ENCODE measurements at regions of chr19 and their contacts with region 1.

Region 1: DNA sequence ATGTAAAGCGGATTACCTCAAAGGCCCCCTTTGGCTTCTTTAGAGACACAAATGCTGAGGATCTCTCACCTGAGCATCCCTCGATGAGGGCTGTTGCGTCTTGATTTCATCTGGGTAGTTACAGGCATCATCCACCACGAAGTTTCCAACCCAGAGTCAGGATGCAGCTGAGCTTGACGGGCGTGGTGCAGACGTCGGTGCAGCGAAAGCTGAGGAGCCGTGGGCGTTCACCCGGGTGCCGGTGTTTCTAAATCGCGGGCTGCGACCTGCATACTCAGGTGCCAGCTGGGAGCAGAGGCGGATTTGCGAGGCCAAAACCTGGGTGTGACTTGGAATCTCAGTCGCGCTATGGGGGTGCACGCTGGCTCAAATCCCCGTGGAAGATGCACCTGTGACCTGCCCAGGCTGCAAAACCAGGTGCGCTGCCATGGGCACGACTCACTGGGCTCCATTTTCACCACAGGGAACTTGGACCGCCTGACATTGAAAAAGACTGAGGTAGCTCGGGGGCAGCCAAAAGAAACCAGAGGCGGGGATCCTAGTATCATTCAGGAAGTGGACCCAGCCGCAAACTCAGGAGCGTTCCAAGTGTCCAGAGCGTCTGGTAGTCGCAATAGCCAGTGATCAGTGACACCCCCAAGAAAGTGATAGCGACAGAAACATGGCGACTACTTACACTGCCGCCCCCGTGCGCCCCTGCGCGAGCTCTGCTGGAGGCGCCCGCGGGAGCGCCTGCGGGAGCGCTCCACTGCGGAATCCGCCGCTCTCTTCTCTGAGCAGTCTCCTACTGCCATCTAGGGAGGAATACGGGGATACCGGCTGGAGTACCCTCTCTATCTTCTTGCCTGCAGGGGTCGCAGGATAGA is 36.4 kb upstream of the IGFL4 start:
- DNase-seq: peak; percentile 63 to 85
- H3K4me3 ChIP-seq: peak overlapping the region; percentile 49 to 75 (median 74)
- H3K27ac ChIP-seq: no peak overlapping the region
- H3K4me1 ChIP-seq: peaks cover 0 to 3% (median 1%) of the 10 kb centered on the region in 4 experiments; a peak in 2 of 7 replicates
- H3K27me3 ChIP-seq: peaks cover 2 to 17% (median 11%) of the 10 kb centered on the region in 4 experiments
- CTCF ChIP-seq: peak; percentile 85 to 100 (median 97)
- EP300 ChIP-seq: no peak
- POLR2A ChIP-seq: no peak
- RAD21 ChIP-seq: peak; percentile 94 to 97

Region 2: GRCh38 chr19:45981350-45981749 is 95.8 kb before region 1 on chr19:
- CTCF ChIA-PET with region 1: no interaction called
- POLR2A ChIA-PET with region 1: no interaction called
- DNase-seq: peak in 1 of 2 experiments; percentile 50
- H3K4me3 ChIP-seq: no peak overlapping the region
- H3K27ac ChIP-seq: no peak overlapping the region
- H3K4me1 ChIP-seq: peaks cover 0 to 7% (median 2%) of the 10 kb centered on the region in 4 experiments; a peak in 2 of 7 replicates
- H3K27me3 ChIP-seq: no peaks in the 10 kb centered on the region
- CTCF ChIP-seq: no peak
- EP300 ChIP-seq: no peak
- POLR2A ChIP-seq: peak in 1 of 2 experiments; percentile 46; a peak in 1 of 3 replicates
- RAD21 ChIP-seq: no peak

Region 3: GRCh38 chr19:46016426-46017094 is 60.6 kb before region 1 on chr19:
- CTCF ChIA-PET with region 1: interaction called, 250 read pairs
- POLR2A ChIA-PET with region 1: no interaction called
- DNase-seq: peak in 1 of 2 experiments; percentile 86
- H3K4me3 ChIP-seq: peak overlapping the region; percentile 30 to 55 (median 45); a peak in 7 of 8 replicates
- H3K27ac ChIP-seq: no peak overlapping the region
- H3K4me1 ChIP-seq: peaks cover 0 to 10% (median 9%) of the 10 kb centered on the region in 4 experiments; a peak in 6 of 7 replicates
- H3K27me3 ChIP-seq: peaks cover 5 to 21% (median 19%) of the 10 kb centered on the region in 4 experiments
- CTCF ChIP-seq: peak; percentile 77 to 92 (median 80)
- EP300 ChIP-seq: no peak
- POLR2A ChIP-seq: no peak
- RAD21 ChIP-seq: peak; percentile 32 to 46; a peak in 3 of 4 replicates

Region 4: DNA sequence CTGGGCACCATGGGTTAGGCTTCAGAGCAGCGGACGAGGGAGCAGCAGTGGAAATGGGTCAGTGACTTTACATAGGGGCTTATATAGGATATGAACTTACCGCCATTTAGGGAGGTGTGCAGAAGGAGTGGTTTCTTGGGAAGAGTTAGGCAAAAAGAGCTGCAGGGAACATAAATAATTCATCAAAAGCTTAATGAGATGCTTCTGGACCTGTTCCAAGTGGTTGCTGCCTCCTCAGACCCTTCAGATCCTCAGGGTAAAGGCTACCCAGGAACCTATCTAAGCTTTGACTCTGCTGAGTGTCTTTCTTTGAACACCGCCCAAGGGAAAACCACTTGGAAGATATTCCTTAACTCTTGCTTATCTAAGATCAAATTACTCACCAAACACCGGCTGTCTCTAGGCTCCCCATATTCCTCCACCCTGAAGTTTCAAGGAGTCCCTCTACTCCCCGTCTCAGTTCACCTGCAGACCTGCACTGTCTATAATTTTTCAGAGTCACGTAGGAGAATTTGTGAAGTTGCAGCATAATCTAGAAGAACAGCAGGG is 36.2 kb before region 1 on chr19 and contains the start of gene IGFL4:
- CTCF ChIA-PET with region 1: interaction called, 250 read pairs
- POLR2A ChIA-PET with region 1: no interaction called
- DNase-seq: no peak
- H3K4me3 ChIP-seq: no peak within 1 kb of the TSS
- H3K27ac ChIP-seq: no peak within 1 kb of the TSS
- H3K4me1 ChIP-seq: no peaks in the 10 kb centered on the region
- H3K27me3 ChIP-seq: peaks cover 0 to 2% (median 2%) of the 10 kb centered on the region in 4 experiments; a peak in 5 of 7 replicates
- CTCF ChIP-seq: no peak
- EP300 ChIP-seq: no peak
- POLR2A ChIP-seq: no peak
- RAD21 ChIP-seq: no peak
- total RNA-seq, gene IGFL4: 0.11 TPM in 1 of 2 replicates, not detected in the other

Region 5: GRCh38 chr19:46090444-46090843 is 13.3 kb after region 1 on chr19:
- CTCF ChIA-PET with region 1: interaction called, 16 read pairs
- POLR2A ChIA-PET with region 1: no interaction called
- DNase-seq: no peak
- H3K4me3 ChIP-seq: no peak overlapping the region
- H3K27ac ChIP-seq: no peak overlapping the region
- H3K4me1 ChIP-seq: no peaks in the 10 kb centered on the region
- H3K27me3 ChIP-seq: peaks cover 0 to 2% (median 0%) of the 10 kb centered on the region in 4 experiments; a peak in 1 of 7 replicates
- CTCF ChIP-seq: no peak
- EP300 ChIP-seq: no peak
- POLR2A ChIP-seq: no peak
- RAD21 ChIP-seq: no peak

Region 6: GRCh38 chr19:46181388-46181779 is 104.2 kb after region 1 on chr19:
- CTCF ChIA-PET with region 1: interaction called, 28 read pairs
- POLR2A ChIA-PET with region 1: interaction called, 3 read pairs
- DNase-seq: no peak
- H3K4me3 ChIP-seq: no peak overlapping the region
- H3K27ac ChIP-seq: no peak overlapping the region
- H3K4me1 ChIP-seq: no peaks in the 10 kb centered on the region
- H3K27me3 ChIP-seq: no peaks in the 10 kb centered on the region
- CTCF ChIP-seq: no peak
- EP300 ChIP-seq: no peak
- POLR2A ChIP-seq: no peak
- RAD21 ChIP-seq: no peak

Region 7: DNA sequence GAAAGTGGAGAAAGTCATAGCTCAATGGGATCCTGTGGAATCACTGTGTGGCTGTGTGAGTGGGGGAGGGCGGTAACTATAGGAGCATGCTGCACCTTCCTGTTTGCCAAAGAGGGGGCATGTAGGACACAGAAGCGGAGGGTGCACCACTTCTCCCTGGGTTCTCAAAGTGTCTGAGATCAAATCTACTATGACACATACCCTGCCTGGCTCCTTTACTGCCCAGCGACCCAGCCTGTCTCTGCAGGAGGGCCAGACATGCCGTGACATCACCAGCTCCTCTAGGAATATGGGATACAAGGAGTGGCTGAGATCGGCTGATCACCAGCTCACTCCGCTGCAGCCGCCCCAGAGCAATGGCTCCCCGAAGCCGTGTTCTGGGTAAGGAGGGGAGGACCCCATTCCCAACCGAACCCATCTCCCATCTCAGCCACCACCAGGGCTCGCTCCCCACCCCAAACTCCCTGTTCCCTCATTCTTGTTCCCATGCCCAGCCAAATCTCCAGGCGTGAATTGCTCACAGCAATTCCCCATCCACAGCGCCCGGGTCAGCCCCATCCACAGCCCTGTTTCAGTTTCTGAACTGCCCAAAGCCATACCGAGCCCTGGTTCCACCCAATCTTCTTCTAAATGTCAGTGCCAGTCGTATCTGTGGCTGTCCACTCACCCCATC is 136.1 kb after region 1 on chr19:
- CTCF ChIA-PET with region 1: interaction called, 17 read pairs
- POLR2A ChIA-PET with region 1: no interaction called
- DNase-seq: no peak
- H3K4me3 ChIP-seq: no peak overlapping the region
- H3K27ac ChIP-seq: no peak overlapping the region
- H3K4me1 ChIP-seq: peaks cover 3 to 17% (median 6%) of the 10 kb centered on the region in 4 experiments; a peak in 5 of 7 replicates
- H3K27me3 ChIP-seq: no peaks in the 10 kb centered on the region; a peak in 1 of 7 replicates
- CTCF ChIP-seq: no peak
- EP300 ChIP-seq: no peak
- POLR2A ChIP-seq: no peak
- RAD21 ChIP-seq: no peak

Region 8: DNA sequence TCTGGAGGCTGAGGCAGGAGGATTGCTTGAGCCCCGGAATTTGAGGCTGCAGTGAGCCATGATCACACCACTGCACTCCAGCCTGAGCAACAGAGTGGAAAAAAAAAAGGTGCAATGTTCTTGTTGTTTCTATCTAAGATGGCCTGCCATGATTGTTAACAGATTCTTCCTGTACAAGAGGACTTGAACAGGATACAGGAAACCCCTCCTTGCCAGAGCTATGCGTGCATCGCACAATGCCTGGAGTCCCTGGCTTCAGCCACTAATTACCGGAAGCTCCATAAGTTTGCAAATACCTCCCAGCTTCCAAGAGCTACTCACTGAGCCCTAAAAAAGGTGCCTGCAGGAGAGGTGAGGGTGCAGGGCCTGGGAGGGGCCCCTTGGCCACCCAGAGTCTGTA is 206.6 kb after region 1 on chr19:
- CTCF ChIA-PET with region 1: interaction called, 11 read pairs
- POLR2A ChIA-PET with region 1: no interaction called
- DNase-seq: no peak
- H3K4me3 ChIP-seq: no peak overlapping the region
- H3K27ac ChIP-seq: no peak overlapping the region
- H3K4me1 ChIP-seq: peaks cover 0 to 3% (median 3%) of the 10 kb centered on the region in 4 experiments; a peak in 5 of 7 replicates
- H3K27me3 ChIP-seq: no peaks in the 10 kb centered on the region
- CTCF ChIP-seq: no peak
- EP300 ChIP-seq: no peak
- POLR2A ChIP-seq: no peak
- RAD21 ChIP-seq: no peak